Cardiac septum (tissue), 1 donor: ENCODE measurements at regions of chr18 and their contacts with region 1.

Region 1: GRCh38 chr18:47150029-47150823 is at the start of gene HDHD2:
- DNase-seq: peak; percentile 94
- total RNA-seq, gene HDHD2: 35.6 TPM

Region 2: DNA sequence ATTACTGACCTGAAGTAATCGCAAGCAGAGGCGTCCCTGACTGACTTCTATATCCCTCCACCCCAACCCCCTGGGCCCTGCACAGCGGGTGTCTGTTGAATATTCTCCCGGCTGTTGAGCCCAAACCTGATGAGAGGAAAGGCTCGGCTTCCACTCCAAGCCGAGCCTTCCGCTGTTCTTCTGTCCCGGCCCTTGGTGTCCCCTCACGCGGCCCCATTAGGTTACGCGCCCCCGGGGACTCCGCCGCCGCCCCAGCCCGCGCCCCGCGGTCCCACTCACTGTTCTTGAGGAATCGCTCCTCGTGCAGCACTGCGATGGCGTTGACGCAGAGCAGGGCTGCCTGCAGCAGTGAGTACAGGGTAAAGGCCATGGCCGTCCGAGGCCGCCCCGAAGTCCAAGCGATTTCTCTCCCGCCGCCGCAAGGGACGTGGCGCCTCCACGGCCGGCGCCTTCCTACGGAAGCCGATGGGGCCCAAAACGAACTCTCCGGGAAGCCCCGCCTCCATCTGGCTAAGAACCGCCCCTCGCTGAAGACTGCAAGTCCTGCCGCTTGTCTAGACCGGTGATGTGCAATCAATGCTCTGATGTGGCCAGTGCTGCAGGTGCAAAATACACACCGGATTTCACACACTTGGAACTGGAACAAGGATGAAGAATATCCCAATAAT is 25.8 kb after region 1 on chr18 and contains the start of gene IER3IP1:
- intact Hi-C with region 1: loop called (anchors 2 kb)
- DNase-seq: peak; percentile 94
- total RNA-seq, gene IER3IP1: 9.5 TPM